Left colon (tissue), 2 donors: ENCODE measurements at regions of chr3 and their contacts with region 1.

Region 1: DNA sequence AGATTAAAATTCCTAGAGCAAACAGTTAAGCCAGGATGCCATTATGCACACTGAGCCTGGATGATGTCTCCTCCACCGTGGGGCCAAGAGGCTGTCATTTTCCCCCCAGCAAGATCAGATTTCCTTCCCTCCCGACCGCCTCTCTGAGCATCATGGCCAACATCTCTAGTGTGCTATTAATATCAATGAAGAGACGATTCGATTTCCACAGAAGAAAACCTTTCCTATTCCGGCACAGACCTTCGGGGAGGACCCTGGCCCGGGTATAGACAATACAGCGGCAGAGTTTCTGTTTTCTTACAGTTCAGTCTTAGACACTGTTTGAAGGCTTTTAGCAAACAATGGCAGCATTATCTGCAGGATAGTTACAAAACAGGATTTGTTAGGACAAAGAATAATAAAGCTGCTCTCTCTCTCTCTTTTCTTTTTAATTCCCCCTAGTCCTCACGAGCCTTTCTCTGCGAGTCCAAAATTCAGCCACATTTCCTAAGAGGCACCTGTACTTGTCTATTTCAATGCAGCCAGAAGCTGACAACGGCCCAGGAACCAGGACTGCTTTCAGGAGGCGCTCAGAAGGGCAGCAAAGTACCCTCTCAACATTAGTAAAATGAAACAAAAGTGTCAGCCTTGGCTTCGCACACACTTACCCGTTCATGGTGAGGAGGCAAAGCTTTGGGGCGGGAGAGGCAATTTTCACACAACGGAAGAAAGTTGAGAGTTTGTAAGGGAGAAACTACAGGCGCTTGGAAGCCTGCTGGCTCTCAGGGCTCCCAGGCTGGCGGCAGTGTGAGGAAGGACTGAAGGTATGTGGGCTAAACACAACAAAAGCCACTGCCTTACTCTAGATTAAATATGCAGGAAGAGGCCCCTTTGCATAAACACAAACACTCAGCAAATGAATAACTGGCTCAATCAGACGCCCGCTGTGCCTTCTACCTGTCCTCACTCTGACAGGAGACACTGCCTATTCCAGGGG is 278.0 kb downstream of the FOXP1 start:
- DNase-seq: peak; percentile 33 to 34
- ATAC-seq: peak; percentile 56

Region 2: DNA sequence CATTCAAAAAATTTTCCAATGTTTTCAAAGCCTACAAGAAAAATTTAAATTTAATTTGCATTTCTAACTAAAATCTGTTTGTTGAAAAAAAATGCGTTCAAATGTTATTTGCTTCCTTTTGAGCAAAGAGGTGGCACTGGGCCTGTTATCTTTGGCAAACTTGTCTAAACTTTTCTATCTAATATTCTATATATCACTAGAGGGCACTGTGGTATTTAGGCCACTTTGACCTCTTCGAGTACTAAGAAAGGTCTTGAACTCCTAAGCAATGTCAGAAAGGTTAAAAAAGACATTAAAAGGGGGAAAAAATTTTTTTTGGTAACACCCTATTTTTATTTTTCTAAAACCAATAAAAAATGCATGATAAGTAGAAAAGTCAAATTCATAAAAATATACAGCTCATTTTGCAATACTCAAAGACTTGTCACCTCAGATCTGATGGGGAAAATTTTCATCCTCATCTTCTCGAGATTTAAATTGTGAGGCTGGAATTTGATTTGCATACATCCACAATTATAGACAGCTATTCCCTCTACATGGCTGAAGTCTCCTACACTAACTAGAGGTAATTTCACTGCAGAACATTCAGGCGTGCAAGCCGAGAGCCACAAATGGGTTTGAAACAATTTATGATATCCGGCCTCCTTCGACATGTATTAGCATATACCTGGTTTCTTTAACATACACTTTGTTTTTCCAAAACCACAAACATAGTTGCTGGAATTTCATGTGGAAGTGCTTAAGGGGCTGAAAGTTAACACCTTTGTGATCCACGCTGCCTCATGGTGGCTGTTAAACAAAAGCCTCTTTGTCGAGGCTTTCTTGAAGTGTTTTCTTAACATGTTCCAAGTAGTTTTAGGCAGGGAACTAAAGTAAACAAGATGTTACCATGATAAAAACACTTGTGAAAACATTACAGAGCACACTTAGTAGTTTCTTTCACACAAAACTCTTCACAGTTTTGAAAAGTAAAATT is 298.4 kb before region 1 on chr3:
- intact Hi-C with region 1: no loop called
- DNase-seq: no peak
- ATAC-seq: peak; percentile 75

Region 3: DNA sequence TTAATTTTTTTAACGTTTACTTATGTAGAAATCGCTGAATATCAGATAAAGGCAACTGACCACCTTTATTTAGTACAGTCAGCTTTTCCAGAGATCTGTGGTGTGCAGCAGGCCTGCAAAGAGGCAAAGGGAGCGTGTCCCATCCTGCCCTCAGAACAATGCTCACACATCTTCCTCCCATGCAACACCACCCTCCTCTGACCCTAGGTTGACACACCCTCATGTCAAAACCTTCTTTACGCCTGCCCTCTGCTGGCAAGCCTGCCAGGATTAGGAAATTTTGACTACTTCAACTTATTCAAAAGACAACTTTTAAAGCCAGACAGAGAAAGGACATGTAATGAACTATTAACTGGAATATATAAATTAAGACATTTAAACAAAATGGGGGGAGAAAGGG is 235.7 kb before region 1 on chr3:
- intact Hi-C with region 1: loop called in 1 of 2 experiments (anchors 10 kb)
- DNase-seq: peak; percentile 66 to 79
- ATAC-seq: peak; percentile 54